ENCODE measurements at regions of chr14 and their contacts with region 1.

Region 1: GRCh38 chr14:75469606-75470237 is 41.9 kb downstream of the JDP2 start:
- DNase-seq: peak; percentile 73 to 91
- ATAC-seq: peak; percentile 76
- H3K4me3 ChIP-seq: no peak overlapping the region
- H3K27ac ChIP-seq: peak overlapping the region in 1 of 2 donors; percentile 1
- H3K4me1 ChIP-seq: peaks cover 0 to 3% of the 10 kb centered on the region in 2 donors
- H3K27me3 ChIP-seq: no peaks in the 10 kb centered on the region

Region 2: GRCh38 chr14:75126679-75127473 is 342.8 kb before region 1 on chr14 and contains the start of gene NEK9:
- intact Hi-C with region 1: loop called in 1 of 2 experiments (anchors 10 kb)
- DNase-seq: peak; percentile 94 to 96
- ATAC-seq: peak; percentile 95
- H3K4me3 ChIP-seq: peak within 1 kb of the TSS; percentile 82 to 89
- H3K27ac ChIP-seq: peak within 1 kb of the TSS; percentile 43 to 89
- H3K4me1 ChIP-seq: peaks cover 2 to 4% of the 10 kb centered on the region in 2 donors
- H3K27me3 ChIP-seq: no peaks in the 10 kb centered on the region
- total RNA-seq, gene NEK9: 75.9 to 104 TPM

Region 3: DNA sequence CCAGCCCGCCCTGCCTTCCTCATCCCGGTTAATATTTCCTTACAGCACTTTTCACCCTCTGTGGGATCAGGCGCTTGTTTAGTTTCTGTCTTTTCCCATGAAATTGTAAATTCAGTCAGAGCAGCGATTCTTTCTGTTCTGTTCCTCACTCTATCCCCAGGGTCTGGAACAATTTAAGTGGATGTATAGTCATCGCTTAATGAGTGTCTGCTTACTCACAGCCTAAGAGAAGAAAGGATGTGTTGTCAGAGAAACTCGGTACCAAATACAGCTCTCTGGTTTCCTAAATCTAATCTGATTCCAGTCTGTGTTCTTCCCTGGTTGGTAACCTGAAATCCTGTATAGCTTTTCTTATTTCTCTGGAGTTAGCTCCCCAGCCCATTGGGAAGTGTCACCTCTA is 146.2 kb before region 1 on chr14:
- intact Hi-C with region 1: no loop called
- DNase-seq: no peak
- ATAC-seq: no peak
- H3K4me3 ChIP-seq: no peak overlapping the region
- H3K27ac ChIP-seq: no peak overlapping the region
- H3K4me1 ChIP-seq: no peaks in the 10 kb centered on the region
- H3K27me3 ChIP-seq: no peaks in the 10 kb centered on the region

Region 4: GRCh38 chr14:75350505-75351060 is 119.1 kb before region 1 on chr14:
- intact Hi-C with region 1: no loop called
- DNase-seq: no peak
- ATAC-seq: no peak
- H3K4me3 ChIP-seq: no peak overlapping the region
- H3K27ac ChIP-seq: no peak overlapping the region
- H3K4me1 ChIP-seq: no peaks in the 10 kb centered on the region
- H3K27me3 ChIP-seq: no peaks in the 10 kb centered on the region

Measured in aorta (tissue), 5 donors.